Common myeloid progenitor, CD34-positive (primary cell): ENCODE measurements at regions of chr7 and their contacts with region 1.

Region 1: DNA sequence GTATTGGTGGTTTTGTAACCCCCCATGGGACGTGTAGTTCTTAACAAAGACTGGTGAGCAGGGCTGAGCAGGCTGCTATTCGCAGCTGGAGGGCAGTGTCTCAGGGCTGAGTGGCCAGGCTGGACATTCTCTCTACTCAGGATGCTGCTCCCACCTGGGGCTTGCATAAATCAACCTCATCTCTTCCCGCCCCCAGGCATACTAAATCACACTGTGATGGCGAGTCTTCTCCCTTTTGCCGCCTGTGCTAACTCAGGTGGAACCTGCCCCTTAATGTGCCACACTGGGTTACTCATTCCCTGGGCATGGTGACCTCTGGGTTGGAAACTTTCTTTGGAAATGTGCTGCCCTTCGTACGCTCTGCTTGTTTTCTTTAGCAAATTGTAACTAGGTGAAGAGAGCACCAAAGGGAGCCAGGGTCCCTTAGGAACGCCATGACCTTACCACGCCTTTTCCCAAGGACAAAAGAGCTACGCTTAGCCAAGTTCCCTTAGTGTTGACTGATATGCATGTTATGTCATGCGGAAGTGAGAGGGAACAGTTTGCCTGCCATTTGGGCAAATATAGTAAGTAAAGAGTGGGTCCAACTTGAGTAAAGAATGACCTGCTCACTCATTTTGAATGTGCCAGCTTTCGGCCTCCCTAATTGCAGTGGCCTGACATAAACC is 40.4 kb upstream of the COBL start:
- DNase-seq: no peak
- H3K4me3 ChIP-seq: no peak overlapping the region
- H3K27ac ChIP-seq: no peak overlapping the region
- H3K4me1 ChIP-seq: no peaks in the 10 kb centered on the region
- H3K27me3 ChIP-seq: peaks cover 0 to 6% (median 0%) of the 10 kb centered on the region in 5 experiments

Region 2: DNA sequence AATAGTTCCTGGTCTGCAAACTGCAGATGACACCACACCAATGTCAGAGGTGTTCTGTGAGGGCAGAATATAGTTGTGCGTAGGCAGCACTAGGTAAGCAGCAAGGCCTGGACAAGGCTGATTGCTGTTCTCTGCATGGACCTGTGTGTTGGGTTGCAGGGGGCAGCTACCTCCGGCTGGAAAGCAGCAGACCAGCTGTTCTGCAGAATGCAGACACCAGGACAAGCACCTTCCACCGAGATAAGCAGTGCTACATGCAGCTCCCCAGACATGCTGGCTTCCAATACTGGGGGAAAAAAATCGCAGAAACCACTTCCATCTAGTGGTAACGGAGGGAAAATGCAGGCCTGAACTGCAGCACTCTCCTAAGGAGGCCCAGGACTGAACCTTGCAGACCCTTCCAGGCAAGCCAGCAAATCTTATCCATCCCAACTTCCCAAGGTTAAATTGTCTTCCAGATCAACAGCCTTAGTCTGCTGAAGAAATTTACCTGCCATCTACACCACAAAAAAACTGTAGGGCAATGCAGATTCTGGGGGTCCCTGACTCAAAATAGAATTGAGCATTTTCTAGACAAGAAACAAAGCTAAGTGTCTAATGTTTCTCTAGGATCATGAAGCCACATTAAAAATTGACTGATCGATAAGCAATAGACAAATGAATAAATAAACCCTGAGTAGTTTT is 10.1 kb after region 1 on chr7:
- CTCF ChIA-PET with region 1: interaction called, 15 read pairs
- POLR2A ChIA-PET with region 1: no interaction called
- DNase-seq: peak; percentile 59 to 77 (median 73)
- H3K4me3 ChIP-seq: no peak overlapping the region
- H3K27ac ChIP-seq: no peak overlapping the region
- H3K4me1 ChIP-seq: peaks cover 0 to 2% (median 0%) of the 10 kb centered on the region in 4 experiments
- H3K27me3 ChIP-seq: no peaks in the 10 kb centered on the region

Region 3: DNA sequence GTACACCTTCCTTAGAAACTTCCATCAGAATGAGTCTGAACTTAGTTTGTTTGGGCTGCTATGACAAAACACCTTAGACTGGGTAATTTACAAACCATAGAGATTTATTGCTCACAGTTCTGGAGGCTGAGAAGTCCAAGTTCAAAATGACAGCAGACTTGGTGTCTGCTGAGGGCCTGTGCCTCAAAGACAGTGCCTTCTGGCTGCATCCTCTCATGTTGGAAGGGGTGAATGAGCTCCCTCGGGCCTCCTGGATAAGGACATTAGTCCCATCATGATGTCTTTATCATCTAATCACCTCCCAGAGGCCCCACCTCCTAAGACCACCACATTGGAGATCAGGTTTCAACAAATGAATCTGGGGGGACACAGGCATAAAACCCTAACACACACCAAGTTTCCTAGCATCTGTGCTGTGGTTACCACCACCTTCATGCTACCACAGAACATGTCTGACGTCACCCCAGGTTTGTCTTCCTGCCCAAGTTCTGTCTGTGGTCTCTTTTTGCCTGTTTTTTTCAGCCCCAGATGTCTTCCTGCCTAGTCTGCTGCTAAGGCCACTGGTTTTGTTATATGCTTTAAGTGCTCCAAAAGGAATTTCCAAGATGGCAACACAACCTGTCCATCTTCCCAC is 110.5 kb after region 1 on chr7:
- CTCF ChIA-PET with region 1: no interaction called
- POLR2A ChIA-PET with region 1: no interaction called
- DNase-seq: peak in 2 of 3 donors; percentile 18 to 34
- H3K4me3 ChIP-seq: no peak overlapping the region
- H3K27ac ChIP-seq: no peak overlapping the region
- H3K4me1 ChIP-seq: peaks cover 0 to 2% (median 0%) of the 10 kb centered on the region in 4 experiments
- H3K27me3 ChIP-seq: peaks cover 0 to 25% (median 18%) of the 10 kb centered on the region in 5 experiments